T-cell (primary cell): ENCODE measurements at regions of chr17 and their contacts with region 1.

Region 1: GRCh38 chr17:28552246-28552999 is at the start of gene UNC119:
- DNase-seq: peak; percentile 48 to 88 (median 73)
- ATAC-seq: peak; percentile 77 to 93 (median 88)
- H3K4me3 ChIP-seq: peak within 1 kb of the TSS; percentile 52 to 64
- H3K4me3 Mint-ChIP-seq: peak within 1 kb of the TSS; percentile 88 to 97 (median 90)
- H3K27ac ChIP-seq: peak within 1 kb of the TSS; percentile 94
- H3K27ac Mint-ChIP-seq: peak within 1 kb of the TSS; percentile 90 to 93
- H3K4me1 ChIP-seq: peaks cover 34 to 53% of the 10 kb centered on the region in 2 experiments
- H3K4me1 Mint-ChIP-seq: peaks cover 48 to 63% (median 52%) of the 10 kb centered on the region in 3 donors
- H3K27me3 ChIP-seq: no peaks in the 10 kb centered on the region
- H3K27me3 Mint-ChIP-seq: no peaks in the 10 kb centered on the region
- total RNA-seq, gene UNC119: 37.7 to 51.7 (median 44.5) TPM

Region 2: DNA sequence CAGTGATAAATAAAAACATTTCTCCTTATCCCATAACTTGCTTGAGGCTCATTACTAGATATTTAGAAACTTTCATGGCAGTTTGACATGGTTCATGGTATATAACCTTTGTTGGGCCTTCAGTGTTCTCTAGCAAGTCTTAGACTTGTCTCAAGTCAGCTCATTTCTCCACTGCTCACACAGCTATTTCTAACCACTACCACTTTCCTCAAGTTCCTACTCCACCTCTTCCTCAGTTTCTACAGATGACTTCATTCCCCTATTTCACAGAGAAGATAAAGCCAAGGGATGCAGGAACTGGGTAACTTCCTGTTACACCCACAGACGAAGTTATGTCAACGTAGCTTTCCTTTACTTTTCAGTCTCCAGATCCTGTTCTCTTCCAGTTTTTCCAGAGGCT is 486.7 kb before region 1 on chr17:
- CTCF ChIA-PET with region 1: interaction called in 1 of 2 experiments, 13 read pairs
- POLR2A ChIA-PET with region 1: no interaction called
- DNase-seq: no peak
- ATAC-seq: no peak
- H3K4me3 ChIP-seq: no peak overlapping the region
- H3K4me3 Mint-ChIP-seq: no peak overlapping the region
- H3K27ac ChIP-seq: no peak overlapping the region
- H3K27ac Mint-ChIP-seq: peak overlapping the region in 1 of 2 donors; percentile 0
- H3K4me1 ChIP-seq: peaks cover 0 to 4% of the 10 kb centered on the region in 2 experiments
- H3K4me1 Mint-ChIP-seq: peaks cover 28 to 40% (median 35%) of the 10 kb centered on the region in 3 donors
- H3K27me3 ChIP-seq: no peaks in the 10 kb centered on the region
- H3K27me3 Mint-ChIP-seq: no peaks in the 10 kb centered on the region

Region 3: GRCh38 chr17:28398280-28398981 is 154.0 kb before region 1 on chr17:
- CTCF ChIA-PET with region 1: no interaction called
- POLR2A ChIA-PET with region 1: interaction called in 1 of 2 experiments, 14 read pairs
- DNase-seq: no peak
- ATAC-seq: no peak
- H3K4me3 ChIP-seq: no peak overlapping the region
- H3K4me3 Mint-ChIP-seq: no peak overlapping the region
- H3K27ac ChIP-seq: no peak overlapping the region
- H3K27ac Mint-ChIP-seq: peak overlapping the region; percentile 3 to 55
- H3K4me1 ChIP-seq: no peaks in the 10 kb centered on the region
- H3K4me1 Mint-ChIP-seq: peaks cover 0 to 4% (median 2%) of the 10 kb centered on the region in 3 donors
- H3K27me3 ChIP-seq: no peaks in the 10 kb centered on the region
- H3K27me3 Mint-ChIP-seq: no peaks in the 10 kb centered on the region

Region 4: GRCh38 chr17:28571255-28572122 is 19.1 kb after region 1 on chr17 and contains the start of gene PIGS:
- CTCF ChIA-PET with region 1: interaction called in 1 of 2 experiments, 6 read pairs
- POLR2A ChIA-PET with region 1: interaction called, 3 to 11 read pairs
- DNase-seq: peak; percentile 73 to 93 (median 85)
- ATAC-seq: peak; percentile 97 to 98 (median 98)
- H3K4me3 ChIP-seq: peak within 1 kb of the TSS; percentile 86 to 95
- H3K4me3 Mint-ChIP-seq: peak within 1 kb of the TSS; percentile 93 to 97 (median 97)
- H3K27ac ChIP-seq: peak within 1 kb of the TSS; percentile 83
- H3K27ac Mint-ChIP-seq: peak within 1 kb of the TSS; percentile 92 to 93
- H3K4me1 ChIP-seq: peaks cover 18 to 47% of the 10 kb centered on the region in 2 experiments
- H3K4me1 Mint-ChIP-seq: peaks cover 61 to 72% (median 68%) of the 10 kb centered on the region in 3 donors
- H3K27me3 ChIP-seq: no peaks in the 10 kb centered on the region
- H3K27me3 Mint-ChIP-seq: no peaks in the 10 kb centered on the region
- total RNA-seq, gene PIGS: 54.9 to 63.0 (median 60.9) TPM